IMR-90 (cell line): ENCODE measurements at regions of chr9 and their contacts with region 1.

Region 1: DNA sequence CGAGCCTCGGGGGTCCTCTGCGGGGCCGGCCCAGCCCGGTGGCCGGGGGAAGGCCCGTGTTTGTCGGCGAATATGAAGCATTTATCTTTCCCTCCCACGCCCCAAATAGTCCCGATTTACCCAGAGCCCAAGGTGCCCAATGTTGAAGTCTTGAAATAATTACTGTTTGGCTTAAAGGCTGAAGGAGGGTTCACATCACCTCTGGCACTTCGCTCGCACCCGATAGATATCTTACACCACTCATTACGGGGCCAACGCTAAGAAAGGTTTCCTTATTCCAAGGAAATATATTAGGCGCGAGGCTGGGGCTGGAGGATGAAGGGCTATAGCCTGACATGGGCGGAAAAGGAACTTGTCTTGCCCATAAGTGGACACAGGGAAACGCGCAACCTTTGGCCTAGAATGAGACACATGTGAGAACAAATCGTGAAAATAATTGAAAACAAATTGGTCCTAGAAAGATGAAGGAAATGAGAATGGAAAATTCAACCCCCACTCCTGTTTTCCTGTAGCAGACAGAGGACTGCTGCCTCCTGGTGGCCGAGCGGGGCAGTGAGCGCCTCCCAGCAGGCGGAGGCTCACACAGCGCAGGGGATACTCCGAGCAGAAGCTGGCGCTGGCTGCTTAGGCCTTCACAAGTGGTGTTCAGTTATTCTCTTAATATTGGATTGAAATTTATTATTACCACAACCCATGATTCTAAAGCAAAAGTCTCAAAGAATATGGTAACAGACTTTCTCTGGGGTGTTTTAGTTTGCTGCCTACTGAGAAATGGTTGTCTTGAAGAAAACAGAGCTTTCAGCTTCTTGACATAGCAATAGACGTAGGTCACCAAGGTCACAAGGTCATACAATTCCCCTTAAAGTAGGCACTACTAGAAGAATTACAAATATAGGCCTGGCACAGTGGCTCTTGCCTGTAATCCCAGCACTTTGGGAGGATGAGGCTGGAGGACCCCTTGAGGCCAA is 7.9 kb downstream of the CCL21 start:
- DNase-seq: peak; percentile 78
- ATAC-seq: peak; percentile 94
- H3K4me3 ChIP-seq: peak overlapping the region; percentile 42
- H3K27ac ChIP-seq: no peak overlapping the region
- H3K4me1 ChIP-seq: no peaks in the 10 kb centered on the region
- H3K27me3 ChIP-seq: peaks cover 12% of the 10 kb centered on the region
- CTCF ChIP-seq: peak; percentile 99
- POLR2A ChIP-seq: no peak
- RAD21 ChIP-seq: peak; percentile 77

Region 2: DNA sequence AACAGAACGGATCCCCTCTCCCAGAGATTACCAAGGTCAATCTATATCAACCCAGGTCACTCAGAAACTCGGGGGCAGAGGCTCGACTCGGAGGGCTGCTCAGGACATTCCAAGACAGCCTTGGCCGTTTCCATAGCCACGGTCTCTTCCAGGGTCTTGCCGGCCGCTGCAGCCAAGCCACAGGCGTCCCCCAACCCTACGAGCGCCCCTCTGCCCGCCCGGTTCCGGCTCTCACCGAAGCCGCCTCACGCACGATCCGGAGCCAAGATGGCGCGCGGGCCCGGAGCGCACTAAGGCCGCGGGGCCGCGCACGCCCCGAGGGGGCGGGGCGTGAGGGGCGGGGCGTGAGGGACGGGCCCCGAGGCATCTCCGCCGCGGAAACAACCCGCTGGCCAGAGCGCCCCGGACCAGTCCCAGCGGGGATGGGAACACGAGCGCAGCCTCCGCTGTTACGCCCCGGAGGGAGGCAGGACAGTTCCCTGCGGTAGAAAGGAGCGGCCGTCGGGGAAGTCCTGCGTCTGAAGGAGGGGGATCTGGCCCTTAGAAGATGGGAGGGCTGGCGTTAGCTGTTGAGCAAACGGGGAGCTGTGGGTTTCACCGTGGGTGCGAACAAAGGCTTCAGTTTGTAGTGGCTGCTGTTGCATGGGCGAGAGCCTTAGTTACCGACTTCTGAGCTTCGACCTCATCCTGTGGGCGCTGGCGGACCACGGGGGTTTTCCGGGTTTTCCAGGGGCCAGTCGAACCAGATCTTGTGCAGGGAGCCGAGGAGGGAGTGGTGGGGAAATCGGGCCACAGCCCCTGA is 90.0 kb before region 1 on chr9 and contains the start of gene RPP25L:
- CTCF ChIA-PET with region 1: no interaction called
- POLR2A ChIA-PET with region 1: no interaction called
- dilution Hi-C with region 1: no loop called
- in situ Hi-C with region 1: no loop called
- intact Hi-C with region 1: loop called (anchors 1 kb)
- DNase-seq: peak; percentile 78
- ATAC-seq: peak; percentile 99
- H3K4me3 ChIP-seq: peak within 1 kb of the TSS; percentile 69
- H3K27ac ChIP-seq: peak within 1 kb of the TSS; percentile 74
- H3K4me1 ChIP-seq: peaks cover 6% of the 10 kb centered on the region; the same call in 1 of the 2 replicates
- H3K27me3 ChIP-seq: no peaks in the 10 kb centered on the region
- CTCF ChIP-seq: no peak
- POLR2A ChIP-seq: peak; percentile 72
- RAD21 ChIP-seq: no peak
- total RNA-seq, gene RPP25L: 13.3 and 20.4 TPM in 2 replicates

Region 3: GRCh38 chr9:34637356-34638137 is 64.5 kb before region 1 on chr9 and contains the start of gene SIGMAR1:
- CTCF ChIA-PET with region 1: no interaction called
- POLR2A ChIA-PET with region 1: no interaction called
- dilution Hi-C with region 1: no loop called
- in situ Hi-C with region 1: no loop called
- intact Hi-C with region 1: loop called (anchors 2 kb)
- DNase-seq: peak; percentile 89
- ATAC-seq: peak; percentile 97
- H3K4me3 ChIP-seq: peak within 1 kb of the TSS; percentile 84
- H3K27ac ChIP-seq: peak within 1 kb of the TSS; percentile 82
- H3K4me1 ChIP-seq: peaks cover 4% of the 10 kb centered on the region
- H3K27me3 ChIP-seq: no peaks in the 10 kb centered on the region
- CTCF ChIP-seq: no peak
- POLR2A ChIP-seq: no peak
- RAD21 ChIP-seq: no peak
- total RNA-seq, gene SIGMAR1: 38.6 and 44.6 TPM in 2 replicates

Region 4: GRCh38 chr9:34646211-34647083 is 55.6 kb before region 1 on chr9 and contains the start of gene GALT:
- CTCF ChIA-PET with region 1: interaction called, 3 read pairs
- POLR2A ChIA-PET with region 1: no interaction called
- dilution Hi-C with region 1: no loop called
- in situ Hi-C with region 1: no loop called
- intact Hi-C with region 1: loop called (anchors 2 kb)
- DNase-seq: peak; percentile 77
- ATAC-seq: peak; percentile 88
- H3K4me3 ChIP-seq: peak within 1 kb of the TSS; percentile 76
- H3K27ac ChIP-seq: peak within 1 kb of the TSS; percentile 82
- H3K4me1 ChIP-seq: peaks cover 15% of the 10 kb centered on the region
- H3K27me3 ChIP-seq: no peaks in the 10 kb centered on the region
- CTCF ChIP-seq: peak; percentile 71
- POLR2A ChIP-seq: no peak
- RAD21 ChIP-seq: no peak
- total RNA-seq, gene GALT: 12.5 and 15.8 TPM in 2 replicates

Region 5: DNA sequence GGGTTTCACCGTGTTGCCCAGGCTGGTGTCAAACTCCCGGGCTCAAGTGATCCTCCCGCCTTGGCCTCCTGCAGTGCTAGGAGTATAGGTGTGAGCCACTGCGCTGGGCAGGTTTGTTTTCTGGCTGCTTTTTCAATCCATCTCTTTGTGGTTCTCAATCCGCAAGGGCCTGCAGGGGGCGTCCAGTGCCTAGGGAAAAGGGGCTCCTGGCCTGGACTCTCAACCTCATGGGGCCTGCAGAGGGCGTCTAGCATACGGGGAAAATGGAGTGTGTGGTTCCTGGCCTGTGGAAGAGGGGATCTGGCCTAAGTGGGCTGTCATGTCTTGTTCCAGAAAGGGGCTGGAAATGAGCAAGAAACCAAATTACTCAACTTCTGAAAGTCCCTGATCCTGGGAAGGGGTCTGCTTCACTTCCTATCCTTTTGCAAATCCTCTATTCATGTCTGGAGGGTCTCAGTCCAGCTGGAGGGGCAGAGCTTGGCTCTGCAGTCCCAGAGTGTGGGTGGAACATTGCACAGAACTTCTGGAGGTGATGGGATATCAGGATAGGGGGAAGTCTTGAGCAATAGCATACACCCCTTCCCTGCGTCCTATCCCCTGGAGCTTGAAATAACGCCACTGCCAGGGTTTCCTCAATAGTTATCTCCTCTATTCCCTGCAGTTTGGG is 26.9 kb before region 1 on chr9:
- CTCF ChIA-PET with region 1: interaction called, 16 read pairs
- POLR2A ChIA-PET with region 1: no interaction called
- dilution Hi-C with region 1: no loop called
- in situ Hi-C with region 1: no loop called
- intact Hi-C with region 1: loop called (anchors 1 kb)
- DNase-seq: peak; percentile 59
- ATAC-seq: peak; percentile 96
- H3K4me3 ChIP-seq: no peak overlapping the region
- H3K27ac ChIP-seq: no peak overlapping the region
- H3K4me1 ChIP-seq: no peaks in the 10 kb centered on the region
- H3K27me3 ChIP-seq: no peaks in the 10 kb centered on the region
- CTCF ChIP-seq: peak; percentile 94
- POLR2A ChIP-seq: no peak
- RAD21 ChIP-seq: peak; percentile 70

Region 6: DNA sequence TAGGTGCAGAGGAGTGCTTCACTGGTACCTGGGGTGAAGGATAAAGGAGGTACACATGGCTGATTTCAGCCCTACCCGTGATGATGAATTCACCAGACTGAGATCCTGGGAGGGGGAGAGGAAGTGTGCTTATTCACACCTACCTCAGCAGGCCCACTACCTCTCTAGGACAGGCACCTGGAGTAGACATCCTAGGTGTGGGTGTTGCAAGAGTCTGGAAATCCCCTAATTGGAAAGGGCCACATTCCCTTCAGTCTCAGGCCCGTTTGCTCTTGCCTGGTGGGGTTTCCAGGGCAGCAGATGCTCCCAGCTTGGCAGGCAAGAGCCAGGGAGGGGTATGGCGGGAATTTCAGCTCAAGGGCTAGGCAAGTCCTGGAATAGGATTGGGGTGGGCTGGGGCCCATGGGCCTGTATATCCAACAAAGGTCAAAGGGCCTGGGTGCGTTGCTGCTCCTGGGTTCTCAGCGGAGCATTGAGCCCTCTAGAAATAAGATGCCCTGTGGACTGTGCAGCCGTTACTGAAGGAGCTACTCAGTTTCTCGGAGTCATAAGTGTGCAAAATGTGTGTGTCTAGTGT is 13.7 kb after region 1 on chr9:
- CTCF ChIA-PET with region 1: interaction called, 14 read pairs
- POLR2A ChIA-PET with region 1: no interaction called
- dilution Hi-C with region 1: no loop called
- in situ Hi-C with region 1: no loop called
- intact Hi-C with region 1: no loop called
- DNase-seq: no peak
- ATAC-seq: no peak
- H3K4me3 ChIP-seq: no peak overlapping the region
- H3K27ac ChIP-seq: no peak overlapping the region
- H3K4me1 ChIP-seq: no peaks in the 10 kb centered on the region; the same call in 1 of the 2 replicates
- H3K27me3 ChIP-seq: peaks cover 32% of the 10 kb centered on the region
- CTCF ChIP-seq: no peak
- POLR2A ChIP-seq: no peak
- RAD21 ChIP-seq: no peak

Region 7: GRCh38 chr9:35051069-35051967 is 349.3 kb after region 1 on chr9:
- CTCF ChIA-PET with region 1: no interaction called
- POLR2A ChIA-PET with region 1: no interaction called
- dilution Hi-C with region 1: no loop called
- in situ Hi-C with region 1: no loop called
- intact Hi-C with region 1: no loop called
- DNase-seq: peak; percentile 57
- ATAC-seq: peak; percentile 76
- H3K4me3 ChIP-seq: no peak overlapping the region
- H3K27ac ChIP-seq: no peak overlapping the region
- H3K4me1 ChIP-seq: no peaks in the 10 kb centered on the region
- H3K27me3 ChIP-seq: no peaks in the 10 kb centered on the region
- CTCF ChIP-seq: peak; percentile 56
- POLR2A ChIP-seq: no peak
- RAD21 ChIP-seq: peak; percentile 56

Region 8: GRCh38 chr9:35102926-35103659 is 401.0 kb after region 1 on chr9 and contains the start of gene STOML2:
- CTCF ChIA-PET with region 1: no interaction called
- POLR2A ChIA-PET with region 1: no interaction called
- dilution Hi-C with region 1: no loop called
- in situ Hi-C with region 1: no loop called
- intact Hi-C with region 1: no loop called
- DNase-seq: peak; percentile 96
- ATAC-seq: peak; percentile 96
- H3K4me3 ChIP-seq: peak within 1 kb of the TSS; percentile 57
- H3K27ac ChIP-seq: peak within 1 kb of the TSS; percentile 74
- H3K4me1 ChIP-seq: peaks cover 8% of the 10 kb centered on the region; the same call in 1 of the 2 replicates
- H3K27me3 ChIP-seq: no peaks in the 10 kb centered on the region
- CTCF ChIP-seq: no peak
- POLR2A ChIP-seq: peak; percentile 92
- RAD21 ChIP-seq: no peak
- total RNA-seq, gene STOML2: 232 and 250 TPM in 2 replicates

Region 9: DNA sequence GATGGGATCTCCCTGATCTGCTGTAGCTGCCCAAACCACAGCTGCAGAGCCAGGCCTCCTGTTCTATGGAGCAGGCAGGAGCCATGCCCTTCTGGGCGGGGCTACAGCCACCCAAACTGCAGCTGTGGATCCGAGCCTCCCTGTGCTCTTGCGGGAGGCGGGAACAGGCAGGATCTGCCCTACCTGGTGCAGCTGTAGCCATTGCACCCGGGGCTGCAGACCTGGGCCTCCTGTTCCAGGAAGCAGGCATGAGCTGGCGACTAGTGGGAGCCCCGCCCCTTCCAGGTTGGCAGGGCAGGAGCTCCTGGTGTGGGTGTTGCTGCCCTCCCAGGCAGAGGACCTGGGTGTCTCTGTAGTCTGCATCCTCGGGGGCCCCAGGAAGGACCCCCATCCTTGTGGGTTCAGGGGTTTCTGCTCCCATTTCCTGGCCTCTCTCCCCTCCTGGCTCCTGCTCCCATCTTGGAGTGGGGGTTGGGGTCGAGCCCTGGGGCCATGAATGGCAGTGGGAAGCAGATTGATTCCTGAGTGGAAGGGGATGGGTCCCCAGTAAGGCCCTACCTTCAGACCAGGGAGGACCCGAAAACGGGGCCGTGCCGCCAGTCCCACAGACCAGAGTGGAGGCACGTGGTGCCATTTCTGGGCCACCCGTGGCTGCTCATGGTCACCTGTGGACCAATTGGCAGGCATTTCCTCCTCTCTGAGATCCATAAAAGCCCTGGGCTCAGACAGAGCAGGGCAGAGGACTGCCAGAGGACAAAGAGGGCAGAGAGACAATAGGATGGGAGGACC is 436.8 kb after region 1 on chr9:
- CTCF ChIA-PET with region 1: no interaction called
- POLR2A ChIA-PET with region 1: no interaction called
- dilution Hi-C with region 1: no loop called
- in situ Hi-C with region 1: no loop called
- intact Hi-C with region 1: no loop called
- DNase-seq: no peak
- ATAC-seq: no peak
- H3K4me3 ChIP-seq: no peak overlapping the region
- H3K27ac ChIP-seq: no peak overlapping the region
- H3K4me1 ChIP-seq: no peaks in the 10 kb centered on the region
- H3K27me3 ChIP-seq: peaks cover 2% of the 10 kb centered on the region; the same call in 1 of the 2 replicates
- CTCF ChIP-seq: no peak
- POLR2A ChIP-seq: no peak
- RAD21 ChIP-seq: no peak

Region 10: GRCh38 chr9:35664531-35665470 is 962.7 kb after region 1 on chr9 and contains the start of gene ARHGEF39:
- CTCF ChIA-PET with region 1: no interaction called
- POLR2A ChIA-PET with region 1: no interaction called
- dilution Hi-C with region 1: no loop called
- in situ Hi-C with region 1: no loop called
- intact Hi-C with region 1: no loop called
- DNase-seq: peak; percentile 68
- ATAC-seq: peak; percentile 82
- H3K4me3 ChIP-seq: peak within 1 kb of the TSS; percentile 72
- H3K27ac ChIP-seq: peak within 1 kb of the TSS; percentile 75
- H3K4me1 ChIP-seq: peaks cover 25% of the 10 kb centered on the region
- H3K27me3 ChIP-seq: no peaks in the 10 kb centered on the region
- CTCF ChIP-seq: peak; percentile 23; the same call in 1 of the 2 replicates
- POLR2A ChIP-seq: peak; percentile 24; the same call in 1 of the 2 replicates
- RAD21 ChIP-seq: no peak
- total RNA-seq, gene ARHGEF39: 0.56 and 2.5 TPM in 2 replicates